Right cardiac atrium (tissue), 5 donors: ENCODE measurements at regions of chr9 and their contacts with region 1.

Region 1: GRCh38 chr9:127199001-127199791 is 65.4 kb upstream of the GARNL3 start:
- DNase-seq: peak; percentile 72 to 93 (median 91)
- ATAC-seq: peak; percentile 59 to 71
- H3K4me3 ChIP-seq: no peak overlapping the region
- H3K27ac ChIP-seq: no peak overlapping the region
- H3K4me1 ChIP-seq: peaks cover 13% of the 10 kb centered on the region
- H3K27me3 ChIP-seq: no peaks in the 10 kb centered on the region

Region 2: GRCh38 chr9:126939821-126940221 is 259.4 kb before region 1 on chr9:
- intact Hi-C with region 1: loop called (anchors 2 to 5 kb)
- DNase-seq: no peak
- ATAC-seq: peak in 1 of 2 donors; percentile 10
- H3K4me3 ChIP-seq: no peak overlapping the region
- H3K27ac ChIP-seq: no peak overlapping the region
- H3K4me1 ChIP-seq: peaks cover 4% of the 10 kb centered on the region
- H3K27me3 ChIP-seq: no peaks in the 10 kb centered on the region

Region 3: DNA sequence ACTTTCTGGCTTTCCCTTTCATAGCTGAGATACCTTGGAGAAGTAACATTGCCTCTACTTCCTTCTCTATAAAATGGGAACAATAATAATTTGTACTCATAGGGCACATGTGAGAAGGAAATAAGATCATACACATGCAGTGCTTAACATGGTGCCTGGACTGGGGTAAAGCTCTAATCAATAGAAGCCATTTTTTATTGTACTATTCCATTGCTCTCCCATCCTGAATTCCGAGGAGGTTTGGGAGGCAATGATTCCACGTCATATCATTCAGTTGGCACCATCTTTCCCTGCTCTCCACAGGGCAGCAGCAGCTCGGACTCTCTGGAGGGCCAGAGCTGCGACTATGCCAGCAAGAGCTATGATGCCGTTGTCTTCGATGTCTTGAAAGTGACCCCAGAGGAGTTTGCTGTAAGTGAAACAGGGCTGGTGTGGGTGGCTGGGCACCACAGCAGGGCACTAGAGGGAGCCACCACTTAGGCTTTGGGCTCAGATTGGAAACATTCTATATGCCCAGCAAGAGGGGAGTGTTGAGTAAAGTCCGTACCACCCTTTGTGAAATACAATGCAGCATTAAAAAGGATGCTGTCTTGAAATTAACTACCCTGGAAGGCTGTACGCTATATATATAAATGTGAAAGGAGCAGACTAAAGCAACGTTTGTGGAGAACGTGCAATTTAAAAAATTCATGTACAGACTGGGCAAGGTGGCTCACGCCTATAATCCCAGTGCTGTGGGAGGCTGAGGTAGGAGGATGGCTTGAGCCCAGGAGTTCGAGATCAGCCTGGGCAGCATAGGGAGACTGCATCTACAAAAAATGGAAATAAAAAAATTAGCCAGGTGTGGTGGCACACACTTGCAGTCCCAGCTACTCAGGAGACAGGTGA is 233.4 kb before region 1 on chr9:
- intact Hi-C with region 1: loop called in 1 of 4 experiments (anchors 5 kb)
- DNase-seq: peak; percentile 54 to 75 (median 69)
- ATAC-seq: peak; percentile 79 to 81
- H3K4me3 ChIP-seq: no peak overlapping the region
- H3K27ac ChIP-seq: no peak overlapping the region
- H3K4me1 ChIP-seq: peaks cover 3% of the 10 kb centered on the region
- H3K27me3 ChIP-seq: no peaks in the 10 kb centered on the region